Activated CD4-positive, alpha-beta T cell treated with anti-CD3 and anti-CD28 coated beads, Interleukin-2, amount 10 ng/mL, durations not matched to agents 7 days and 5 days (primary cell): ENCODE measurements at regions of chr20 and their contacts with region 1.

Region 1: DNA sequence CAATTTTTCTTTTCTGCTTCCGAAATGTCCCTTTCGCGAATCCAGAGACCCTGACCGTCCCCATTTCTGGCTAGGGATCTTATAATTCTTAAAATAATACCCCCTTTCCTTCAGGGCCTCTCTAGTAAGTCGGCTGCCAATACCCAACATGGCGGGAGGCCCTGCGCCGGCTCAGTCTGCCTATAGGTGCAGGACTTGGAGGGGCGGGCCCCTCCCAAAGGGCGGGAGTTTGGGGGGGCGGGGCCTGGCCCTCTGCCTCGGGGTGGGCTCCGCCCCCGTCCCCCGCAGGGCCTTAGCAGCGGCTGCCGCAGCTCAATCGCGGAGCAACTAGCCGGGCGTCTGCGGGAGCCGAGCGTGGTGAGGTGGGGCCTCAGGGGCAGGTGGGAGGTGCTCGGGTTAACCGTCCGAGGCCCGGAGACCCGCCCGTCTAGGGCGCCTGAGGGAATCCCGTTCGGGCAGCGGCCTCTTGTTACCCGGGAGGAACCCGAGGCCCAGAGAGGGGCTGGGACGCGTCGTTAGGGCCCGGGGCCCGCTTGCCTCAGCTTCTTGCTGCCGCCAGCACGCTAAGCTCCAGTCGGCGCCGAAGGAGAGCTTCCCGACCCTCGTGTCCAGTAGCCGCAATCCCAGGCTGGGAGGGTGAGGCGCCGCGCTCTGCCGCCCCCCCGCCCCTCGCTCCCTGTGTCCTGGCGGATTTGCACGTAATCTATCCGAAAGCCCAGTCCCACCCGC is at the start of gene CEP250:
- DNase-seq: peak; percentile 95
- H3K4me3 Mint-ChIP-seq: peak within 1 kb of the TSS; percentile 92
- H3K27ac Mint-ChIP-seq: peak within 1 kb of the TSS; percentile 99
- H3K4me1 Mint-ChIP-seq: peaks cover 36% of the 10 kb centered on the region
- H3K27me3 Mint-ChIP-seq: no peaks in the 10 kb centered on the region
- total RNA-seq, gene CEP250: 56.8 to 75.4 TPM

Region 2: DNA sequence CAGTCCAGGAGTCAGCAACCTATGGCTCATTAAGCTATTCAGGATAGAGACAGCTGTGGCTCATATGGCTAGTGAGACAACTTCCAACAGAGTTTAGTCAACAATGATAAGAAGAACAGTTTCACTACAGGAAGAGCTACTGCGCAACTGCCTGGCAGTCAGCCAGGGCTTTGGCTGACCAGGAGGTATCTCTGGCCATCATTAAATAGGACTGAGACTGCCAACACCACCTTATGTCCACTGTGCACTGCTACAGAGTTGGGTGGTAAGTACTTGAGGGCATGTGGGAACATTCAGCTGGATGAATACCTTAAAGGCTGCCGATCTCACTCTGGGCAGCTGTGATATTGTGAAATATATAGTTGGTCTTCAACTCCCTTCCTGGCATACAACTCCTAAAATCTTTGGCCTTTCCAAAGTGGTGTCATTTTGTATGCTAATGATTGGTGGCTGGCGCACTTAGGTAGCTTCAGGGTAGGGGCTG is 110.6 kb before region 1 on chr20:
- CTCF ChIA-PET with region 1: no interaction called
- POLR2A ChIA-PET with region 1: no interaction called
- DNase-seq: no peak
- H3K4me3 Mint-ChIP-seq: no peak overlapping the region
- H3K27ac Mint-ChIP-seq: no peak overlapping the region
- H3K4me1 Mint-ChIP-seq: no peaks in the 10 kb centered on the region
- H3K27me3 Mint-ChIP-seq: no peaks in the 10 kb centered on the region

Region 3: GRCh38 chr20:35467339-35468224 is 12.5 kb after region 1 on chr20:
- CTCF ChIA-PET with region 1: interaction called, 26 read pairs
- POLR2A ChIA-PET with region 1: no interaction called
- DNase-seq: no peak
- H3K4me3 Mint-ChIP-seq: no peak overlapping the region
- H3K27ac Mint-ChIP-seq: peak overlapping the region; percentile 55
- H3K4me1 Mint-ChIP-seq: peaks cover 5% of the 10 kb centered on the region
- H3K27me3 Mint-ChIP-seq: no peaks in the 10 kb centered on the region